ENCODE measurements at regions of chr2 and their contacts with region 1.

Region 1: GRCh38 chr2:61764035-61764800 is 89.6 kb downstream of the FAM161A start:
- DNase-seq: peak; percentile 96
- H3K4me3 Mint-ChIP-seq: peak overlapping the region; percentile 91
- H3K27ac Mint-ChIP-seq: peak overlapping the region; percentile 97
- H3K4me1 Mint-ChIP-seq: peaks cover 24% of the 10 kb centered on the region
- H3K27me3 Mint-ChIP-seq: no peaks in the 10 kb centered on the region

Region 2: GRCh38 chr2:61368687-61369665 is 395.2 kb before region 1 on chr2:
- intact Hi-C with region 1: loop called (anchors 10 kb)
- DNase-seq: no peak
- H3K4me3 Mint-ChIP-seq: no peak overlapping the region
- H3K27ac Mint-ChIP-seq: no peak overlapping the region
- H3K4me1 Mint-ChIP-seq: peaks cover 37% of the 10 kb centered on the region
- H3K27me3 Mint-ChIP-seq: no peaks in the 10 kb centered on the region

Region 3: DNA sequence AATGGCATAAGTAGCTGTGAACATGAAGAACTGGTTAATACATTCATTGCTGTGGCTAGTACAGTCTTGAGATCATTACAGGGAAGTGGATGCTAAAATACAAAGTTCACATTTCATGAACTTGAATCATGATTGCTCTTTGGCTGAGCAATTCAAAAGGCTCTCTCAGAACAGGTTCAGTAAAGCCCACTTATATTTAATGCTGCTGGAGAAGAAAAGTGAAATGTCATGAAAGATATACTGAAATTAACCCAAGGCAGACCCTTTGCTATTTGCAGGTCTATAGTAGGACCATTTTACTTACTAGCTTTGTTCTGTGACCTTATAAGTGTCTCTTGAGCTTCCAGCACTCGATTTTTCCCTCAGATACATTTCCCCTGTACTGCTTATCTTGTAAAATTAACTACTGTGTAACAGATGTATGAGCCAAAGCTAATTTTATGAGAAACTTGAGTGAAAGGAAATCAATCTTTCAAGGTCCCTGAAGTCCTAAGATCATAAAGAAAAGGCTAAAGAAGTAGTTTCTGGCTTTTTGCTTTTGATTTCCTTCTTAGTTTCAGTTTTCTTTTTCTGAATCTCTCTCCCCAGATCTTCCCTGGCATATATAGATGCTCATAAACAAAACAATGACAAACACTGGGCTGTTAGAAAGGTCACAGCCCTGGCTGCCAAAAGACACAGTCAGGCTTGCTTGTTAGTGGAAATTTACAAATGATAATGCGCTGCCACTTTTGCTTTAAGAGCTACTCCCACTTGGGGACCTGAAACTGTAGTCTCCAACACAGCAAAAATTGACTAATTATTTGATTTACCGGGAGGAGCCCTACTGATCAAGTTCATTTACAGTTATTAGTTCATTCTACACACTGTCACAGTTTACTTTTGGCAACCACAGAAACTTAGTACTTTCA is 93.4 kb before region 1 on chr2:
- intact Hi-C with region 1: loop called (anchors 1 kb)
- DNase-seq: peak; percentile 22
- H3K4me3 Mint-ChIP-seq: peak overlapping the region; percentile 73
- H3K27ac Mint-ChIP-seq: peak overlapping the region; percentile 85
- H3K4me1 Mint-ChIP-seq: peaks cover 19% of the 10 kb centered on the region
- H3K27me3 Mint-ChIP-seq: peaks cover 7% of the 10 kb centered on the region

Region 4: GRCh38 chr2:61888267-61889055 is 124.2 kb after region 1 on chr2 and contains the start of gene CCT4:
- intact Hi-C with region 1: loop called (anchors 1 kb)
- DNase-seq: peak; percentile 86
- H3K4me3 Mint-ChIP-seq: peak within 1 kb of the TSS; percentile 95
- H3K27ac Mint-ChIP-seq: peak within 1 kb of the TSS; percentile 97
- H3K4me1 Mint-ChIP-seq: peaks cover 23% of the 10 kb centered on the region
- H3K27me3 Mint-ChIP-seq: no peaks in the 10 kb centered on the region
- total RNA-seq, gene CCT4: 354 and 381 TPM in 2 replicates

Region 5: DNA sequence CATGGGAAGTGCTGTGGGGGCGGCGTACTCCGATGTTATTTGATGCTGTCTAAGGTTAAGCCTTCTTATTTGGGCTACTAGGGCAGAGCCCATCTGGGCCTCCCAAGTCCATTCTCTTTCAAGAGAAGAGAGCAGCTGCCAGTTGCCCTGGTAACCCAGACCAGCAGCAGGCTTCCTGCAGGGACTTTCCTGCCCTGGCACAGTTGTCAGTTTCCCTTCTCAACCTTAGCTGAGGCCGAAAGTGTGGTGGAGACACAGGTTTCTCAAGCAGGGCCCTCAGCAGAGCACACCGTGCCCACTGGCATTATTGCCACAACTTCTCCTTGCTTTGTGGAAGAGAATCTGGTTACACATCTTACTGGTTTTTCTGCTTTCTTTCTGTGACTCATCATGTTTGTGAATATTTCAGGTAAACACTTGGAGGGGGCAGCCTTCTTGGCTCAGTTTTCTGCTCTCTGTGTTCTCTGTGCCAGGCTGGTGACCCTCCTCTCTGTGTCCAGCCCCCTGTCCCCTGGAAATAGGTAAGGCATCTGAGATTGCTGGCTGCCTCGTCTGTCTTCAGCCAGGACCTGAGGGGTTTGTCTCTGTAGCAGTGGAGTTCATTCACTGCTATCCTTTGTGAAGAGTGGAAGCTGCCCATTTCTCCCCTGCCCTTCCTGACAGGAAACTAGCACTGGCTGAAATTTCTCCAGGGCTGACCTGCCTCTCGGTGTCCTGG is 542.7 kb after region 1 on chr2:
- intact Hi-C with region 1: loop called (anchors 5 kb)
- DNase-seq: peak; percentile 36
- H3K4me3 Mint-ChIP-seq: peak overlapping the region; percentile 54
- H3K27ac Mint-ChIP-seq: peak overlapping the region; percentile 91
- H3K4me1 Mint-ChIP-seq: peaks cover 81% of the 10 kb centered on the region
- H3K27me3 Mint-ChIP-seq: peaks cover 8% of the 10 kb centered on the region

Measured in activated T-helper 1 cell treated with anti-CD3 and anti-CD28 coated beads, Interleukin-12 subunit alpha, Interleukin-12 subunit beta, Interleukin-2, Interleukin-4 antibody, amounts not matched to agents 30 ng/mL and 10 ng/mL and 1 ng/mL, durations not matched to agents 14 hours and 24 hours and 36 hours (primary cell).